ENCODE measurements at regions of chr7 and their contacts with region 1.

Region 1: DNA sequence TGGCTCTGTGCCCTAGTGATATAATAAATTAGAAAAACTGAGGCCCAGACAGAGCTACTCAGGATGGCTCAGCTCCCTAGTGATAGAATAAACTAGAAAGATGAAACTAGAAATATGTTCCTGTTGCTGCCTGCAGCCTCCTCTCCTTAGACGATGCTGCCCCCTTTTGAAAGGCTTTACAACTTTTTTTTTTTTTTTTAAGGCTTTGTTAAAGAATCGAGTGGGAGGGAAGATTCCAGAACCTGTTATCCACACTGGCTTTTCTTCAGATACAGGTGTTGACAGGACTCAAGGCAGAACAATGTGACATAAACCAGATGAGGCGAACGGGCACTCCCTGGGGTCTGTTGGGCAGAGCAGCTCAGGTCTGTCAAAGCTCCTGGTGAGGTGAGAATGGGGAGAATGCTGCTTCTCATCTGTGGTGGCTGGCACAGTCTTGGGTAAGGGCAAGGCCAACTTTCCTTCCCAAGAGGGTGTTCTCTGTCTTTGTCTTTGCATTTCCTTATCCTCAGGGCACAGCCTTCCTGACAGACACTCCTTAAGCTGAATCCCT is 175.1 kb downstream of the COBL start:
- DNase-seq: peak; percentile 81
- H3K4me3 ChIP-seq: no peak overlapping the region
- H3K27ac ChIP-seq: no peak overlapping the region
- H3K4me1 ChIP-seq: peaks cover 27% of the 10 kb centered on the region
- H3K27me3 ChIP-seq: peaks cover 0 to 2% of the 10 kb centered on the region in 2 experiments
- CTCF ChIP-seq: peak; percentile 48 to 60
- POLR2A ChIP-seq: no peak

Region 2: DNA sequence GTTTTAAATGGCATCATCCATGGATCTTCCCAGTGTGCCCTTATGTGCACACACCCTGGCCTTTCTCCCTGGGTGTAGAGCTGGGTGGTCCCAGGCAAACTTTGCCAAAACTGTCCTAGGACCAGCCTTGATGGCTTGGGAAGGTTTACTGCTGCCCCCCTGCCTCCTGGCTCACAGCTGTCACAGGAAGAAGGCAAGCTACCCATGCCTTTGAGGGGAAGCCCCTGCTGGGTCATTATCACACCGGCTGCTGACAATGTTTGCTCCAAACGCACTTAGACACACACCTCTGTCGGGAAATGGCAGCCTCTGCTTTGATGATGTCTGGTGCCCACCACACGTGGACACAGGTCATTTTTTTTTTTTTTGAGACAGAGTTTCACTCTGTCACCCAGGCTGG is 666.2 kb before region 1 on chr7:
- CTCF ChIA-PET with region 1: interaction called, 11 read pairs
- POLR2A ChIA-PET with region 1: no interaction called
- dilution Hi-C with region 1: no loop called
- intact Hi-C with region 1: no loop called
- DNase-seq: no peak
- H3K4me3 ChIP-seq: no peak overlapping the region
- H3K27ac ChIP-seq: no peak overlapping the region
- H3K4me1 ChIP-seq: no peaks in the 10 kb centered on the region
- H3K27me3 ChIP-seq: no peaks in the 10 kb centered on the region
- CTCF ChIP-seq: no peak
- POLR2A ChIP-seq: no peak

Region 3: GRCh38 chr7:50621206-50621605 is 520.3 kb before region 1 on chr7:
- CTCF ChIA-PET with region 1: interaction called, 16 read pairs
- POLR2A ChIA-PET with region 1: no interaction called
- dilution Hi-C with region 1: no loop called
- intact Hi-C with region 1: no loop called
- DNase-seq: no peak
- H3K4me3 ChIP-seq: no peak overlapping the region
- H3K27ac ChIP-seq: no peak overlapping the region
- H3K4me1 ChIP-seq: peaks cover 7% of the 10 kb centered on the region
- H3K27me3 ChIP-seq: no peaks in the 10 kb centered on the region
- CTCF ChIP-seq: no peak
- POLR2A ChIP-seq: no peak

Region 4: DNA sequence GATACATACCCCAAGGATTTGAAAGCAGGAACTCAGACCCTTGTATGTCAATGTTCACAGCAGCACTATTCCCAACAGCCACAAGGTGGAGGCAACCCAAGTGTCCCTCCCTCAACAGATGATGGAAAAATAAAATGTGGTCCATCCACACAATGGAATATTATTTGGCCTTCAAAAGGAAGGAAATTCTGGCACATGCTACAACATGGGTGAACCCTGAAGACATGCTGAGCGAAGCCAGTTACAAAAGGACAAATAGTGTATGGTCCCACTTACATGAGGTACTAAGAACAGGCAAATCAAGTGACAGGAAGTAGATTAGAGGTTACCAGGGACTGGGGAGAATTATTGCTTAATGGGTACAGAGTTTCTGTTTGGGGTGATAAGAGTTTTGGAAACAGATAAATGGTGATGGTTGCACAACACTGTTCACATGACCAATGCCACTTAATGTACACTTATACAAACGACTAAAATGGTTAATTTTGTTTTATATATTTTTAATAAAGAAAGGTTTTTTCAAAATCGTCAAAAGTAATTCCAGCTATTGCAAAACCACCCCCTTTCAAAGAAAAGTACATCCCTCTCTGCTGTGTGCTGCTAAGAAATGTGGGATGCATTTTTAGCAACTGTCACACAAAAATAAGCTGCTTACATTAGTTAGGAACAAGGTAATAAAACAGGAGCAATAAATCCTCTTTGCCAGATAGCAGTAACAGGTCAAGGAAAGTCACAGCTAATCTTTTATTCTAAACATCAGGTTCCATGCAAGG is 444.5 kb before region 1 on chr7:
- CTCF ChIA-PET with region 1: interaction called, 11 read pairs
- POLR2A ChIA-PET with region 1: no interaction called
- dilution Hi-C with region 1: no loop called
- intact Hi-C with region 1: loop called (anchors 1 kb)
- DNase-seq: peak; percentile 29
- H3K4me3 ChIP-seq: no peak overlapping the region
- H3K27ac ChIP-seq: no peak overlapping the region
- H3K4me1 ChIP-seq: peaks cover 16% of the 10 kb centered on the region
- H3K27me3 ChIP-seq: no peaks in the 10 kb centered on the region
- CTCF ChIP-seq: peak; percentile 38 to 39
- POLR2A ChIP-seq: no peak

Region 5: DNA sequence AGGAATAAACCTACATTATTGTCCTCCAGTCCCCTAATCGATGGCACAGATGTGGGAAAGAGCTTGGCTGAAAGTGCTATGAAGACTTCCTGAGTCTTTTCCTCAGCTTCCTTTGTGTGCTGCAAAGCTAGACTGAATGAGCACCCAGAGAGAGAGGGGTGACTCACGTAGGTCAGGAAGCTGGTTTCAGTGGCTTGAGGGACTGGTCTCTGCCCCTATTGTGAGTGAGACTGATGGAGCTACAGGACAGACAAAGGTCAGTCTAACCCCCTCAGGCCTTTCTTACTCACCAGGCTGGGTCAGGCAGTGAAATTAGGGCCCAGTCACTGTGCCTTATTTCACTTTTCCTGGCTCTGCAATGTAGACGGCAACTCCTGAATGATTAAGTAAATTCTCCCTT is 187.7 kb before region 1 on chr7:
- CTCF ChIA-PET with region 1: interaction called, 8 read pairs
- POLR2A ChIA-PET with region 1: no interaction called
- dilution Hi-C with region 1: no loop called
- intact Hi-C with region 1: loop called (anchors 2 kb)
- DNase-seq: peak; percentile 81
- H3K4me3 ChIP-seq: no peak overlapping the region
- H3K27ac ChIP-seq: peak overlapping the region; percentile 85
- H3K4me1 ChIP-seq: peaks cover 57% of the 10 kb centered on the region
- H3K27me3 ChIP-seq: no peaks in the 10 kb centered on the region
- CTCF ChIP-seq: no peak
- POLR2A ChIP-seq: peak; percentile 33

Region 6: GRCh38 chr7:51154201-51154600 is 12.7 kb after region 1 on chr7:
- CTCF ChIA-PET with region 1: interaction called, 58 read pairs
- POLR2A ChIA-PET with region 1: no interaction called
- dilution Hi-C with region 1: no loop called
- intact Hi-C with region 1: no loop called
- DNase-seq: no peak
- H3K4me3 ChIP-seq: no peak overlapping the region
- H3K27ac ChIP-seq: no peak overlapping the region
- H3K4me1 ChIP-seq: no peaks in the 10 kb centered on the region
- H3K27me3 ChIP-seq: peaks cover 3 to 23% of the 10 kb centered on the region in 2 experiments
- CTCF ChIP-seq: no peak
- POLR2A ChIP-seq: no peak

Region 7: DNA sequence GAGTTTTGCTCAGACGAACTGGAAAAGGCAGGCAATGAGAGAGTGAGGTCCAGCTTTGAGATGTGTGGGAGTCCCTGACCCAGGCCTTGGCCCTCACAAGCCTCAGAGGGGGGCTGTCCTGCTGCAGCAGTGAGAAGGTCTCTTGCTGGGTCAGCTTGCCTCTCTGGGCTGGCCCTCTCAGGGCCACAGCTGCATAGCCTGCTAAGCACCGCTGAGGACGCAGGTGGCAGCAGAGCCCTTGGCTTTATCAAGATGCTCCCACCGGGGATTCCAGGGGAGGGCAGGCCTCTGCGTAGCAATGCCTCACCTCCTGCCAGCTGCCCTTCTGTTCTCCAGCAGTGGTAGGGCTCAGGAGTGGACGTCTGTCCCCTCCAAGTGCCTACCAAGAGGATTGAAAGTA is 46.4 kb after region 1 on chr7:
- CTCF ChIA-PET with region 1: no interaction called
- POLR2A ChIA-PET with region 1: no interaction called
- dilution Hi-C with region 1: no loop called
- intact Hi-C with region 1: no loop called
- DNase-seq: no peak
- H3K4me3 ChIP-seq: no peak overlapping the region
- H3K27ac ChIP-seq: no peak overlapping the region
- H3K4me1 ChIP-seq: no peaks in the 10 kb centered on the region
- H3K27me3 ChIP-seq: peaks cover 0 to 4% of the 10 kb centered on the region in 2 experiments
- CTCF ChIP-seq: no peak
- POLR2A ChIP-seq: no peak